Heart left ventricle (tissue), 16 donors: ENCODE measurements at regions of chr10 and their contacts with region 1.

Region 1: GRCh38 chr10:29998142-29998808 is 61.1 kb downstream of the JCAD start:
- DNase-seq: peak; percentile 68 to 79 (median 70)
- ATAC-seq: peak in 3 of 4 donors; percentile 56 to 73 (median 72)
- H3K4me3 ChIP-seq: no peak overlapping the region
- H3K27ac ChIP-seq: no peak overlapping the region
- H3K4me1 ChIP-seq: peaks cover 8 to 31% (median 27%) of the 10 kb centered on the region in 12 donors
- H3K27me3 ChIP-seq: peaks cover 0 to 4% (median 0%) of the 10 kb centered on the region in 9 donors
- CTCF ChIP-seq: peak; percentile 97 to 100 (median 98)
- POLR2A ChIP-seq: no peak

Region 2: GRCh38 chr10:29598851-29599311 is 399.4 kb before region 1 on chr10:
- intact Hi-C with region 1: loop called in 1 of 10 experiments (anchors 10 kb)
- DNase-seq: peak in 3 of 5 donors; percentile 48 to 63 (median 55)
- ATAC-seq: peak; percentile 82 to 86 (median 84)
- H3K4me3 ChIP-seq: peak overlapping the region in 5 of 12 donors; percentile 1 to 32 (median 15)
- H3K27ac ChIP-seq: peak overlapping the region; percentile 71 to 95 (median 80)
- H3K4me1 ChIP-seq: peaks cover 0 to 89% (median 31%) of the 10 kb centered on the region in 12 donors
- H3K27me3 ChIP-seq: no peaks in the 10 kb centered on the region
- CTCF ChIP-seq: no peak
- POLR2A ChIP-seq: no peak

Region 3: DNA sequence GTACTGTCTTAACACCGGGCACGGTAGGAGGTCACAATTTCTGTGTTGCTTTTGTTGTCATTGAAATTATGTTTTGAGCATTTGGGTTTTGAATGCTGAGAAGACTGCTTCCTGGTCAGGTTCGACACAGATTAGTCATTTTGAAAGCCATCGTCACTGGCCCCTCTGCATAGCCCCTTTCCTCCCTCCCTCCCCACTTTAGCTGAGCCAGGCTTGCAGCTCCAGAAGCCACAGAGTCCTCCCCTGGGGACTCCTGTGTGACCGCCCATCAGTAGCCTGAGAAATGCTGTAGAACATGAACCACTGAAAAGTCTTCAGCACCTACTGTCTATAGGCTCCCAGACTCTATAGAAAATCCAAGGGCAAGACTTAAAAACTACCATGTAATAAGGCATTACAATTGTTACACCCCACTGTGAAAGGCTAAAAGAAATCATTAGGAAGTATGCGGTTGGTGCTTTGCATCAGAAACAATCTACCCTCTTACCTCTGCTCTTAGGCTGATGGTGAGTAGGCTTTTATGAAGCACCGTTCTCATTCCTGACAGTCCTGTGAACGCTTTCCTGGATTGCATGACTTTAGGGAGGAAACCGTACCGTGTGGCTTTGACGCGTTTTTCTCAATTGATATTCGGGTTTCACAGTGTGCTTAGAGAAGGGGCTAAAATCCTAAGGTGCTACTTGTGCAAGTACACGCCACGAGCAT is 36.3 kb after region 1 on chr10:
- intact Hi-C with region 1: no loop called
- DNase-seq: no peak
- ATAC-seq: no peak
- H3K4me3 ChIP-seq: no peak overlapping the region
- H3K27ac ChIP-seq: no peak overlapping the region
- H3K4me1 ChIP-seq: peaks cover 3 to 60% (median 35%) of the 10 kb centered on the region in 12 donors
- H3K27me3 ChIP-seq: peaks cover 0 to 64% (median 0%) of the 10 kb centered on the region in 9 donors
- CTCF ChIP-seq: no peak
- POLR2A ChIP-seq: no peak

Region 4: DNA sequence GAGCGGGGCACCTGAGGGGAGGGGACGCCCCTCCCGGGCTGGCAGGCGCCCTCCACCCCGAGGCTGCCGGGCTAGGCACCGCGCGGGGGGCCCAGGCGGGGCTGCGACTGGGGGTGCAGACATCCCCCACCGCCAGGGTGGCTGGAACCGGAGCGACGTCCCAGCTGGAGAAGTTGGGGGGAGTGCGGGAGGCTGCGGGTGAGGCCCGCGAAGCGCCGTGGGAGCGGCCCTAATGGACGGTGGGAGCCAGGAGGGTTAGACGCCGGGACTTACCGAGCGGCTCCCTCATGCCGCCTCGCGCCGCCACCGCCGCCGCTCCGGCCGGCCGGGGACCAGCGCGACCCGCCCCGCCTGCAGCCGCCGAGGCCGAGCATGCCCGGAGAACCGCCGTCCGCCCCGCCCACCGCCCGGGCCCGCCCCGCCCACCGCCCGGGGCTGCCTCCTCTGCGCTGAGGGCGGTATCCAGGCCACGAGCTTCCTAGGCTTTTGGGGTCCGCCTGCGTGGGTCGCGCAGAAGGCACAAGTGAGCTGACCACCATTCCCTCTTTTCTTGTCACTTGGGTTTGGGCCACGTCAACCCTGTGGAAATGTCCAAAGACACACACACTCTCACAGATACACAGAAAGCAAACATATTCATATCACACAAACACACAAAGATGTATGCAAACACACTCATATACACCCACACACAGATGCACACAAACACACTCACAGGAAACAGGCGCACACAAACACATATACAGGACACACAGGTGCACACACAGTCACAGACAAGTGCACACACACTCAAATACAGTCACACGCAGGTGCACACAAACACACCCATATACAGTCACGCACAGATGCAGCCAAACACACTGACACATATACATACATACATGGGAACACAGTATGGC is 61.2 kb after region 1 on chr10 and contains the start of gene JCAD:
- intact Hi-C with region 1: loop called in 1 of 10 experiments (anchors 2 kb)
- DNase-seq: peak; percentile 82 to 88 (median 85)
- ATAC-seq: peak; percentile 46 to 95 (median 86)
- H3K4me3 ChIP-seq: peak within 1 kb of the TSS; percentile 72 to 97 (median 85)
- H3K27ac ChIP-seq: peak within 1 kb of the TSS; percentile 90 to 98 (median 94)
- H3K4me1 ChIP-seq: peaks cover 0 to 53% (median 20%) of the 10 kb centered on the region in 12 donors
- H3K27me3 ChIP-seq: peaks cover 0 to 42% (median 0%) of the 10 kb centered on the region in 9 donors
- CTCF ChIP-seq: no peak
- POLR2A ChIP-seq: peak in 1 of 2 donors; percentile 79
- total RNA-seq, gene JCAD: 10.4 to 51.7 (median 22.7) TPM

Region 5: GRCh38 chr10:30241422-30242110 is 243.3 kb after region 1 on chr10:
- intact Hi-C with region 1: loop called (anchors 1 to 5 kb)
- DNase-seq: no peak
- ATAC-seq: no peak
- H3K4me3 ChIP-seq: no peak overlapping the region
- H3K27ac ChIP-seq: no peak overlapping the region
- H3K4me1 ChIP-seq: peaks cover 0 to 13% (median 0%) of the 10 kb centered on the region in 12 donors
- H3K27me3 ChIP-seq: no peaks in the 10 kb centered on the region
- CTCF ChIP-seq: no peak
- POLR2A ChIP-seq: no peak

Region 6: DNA sequence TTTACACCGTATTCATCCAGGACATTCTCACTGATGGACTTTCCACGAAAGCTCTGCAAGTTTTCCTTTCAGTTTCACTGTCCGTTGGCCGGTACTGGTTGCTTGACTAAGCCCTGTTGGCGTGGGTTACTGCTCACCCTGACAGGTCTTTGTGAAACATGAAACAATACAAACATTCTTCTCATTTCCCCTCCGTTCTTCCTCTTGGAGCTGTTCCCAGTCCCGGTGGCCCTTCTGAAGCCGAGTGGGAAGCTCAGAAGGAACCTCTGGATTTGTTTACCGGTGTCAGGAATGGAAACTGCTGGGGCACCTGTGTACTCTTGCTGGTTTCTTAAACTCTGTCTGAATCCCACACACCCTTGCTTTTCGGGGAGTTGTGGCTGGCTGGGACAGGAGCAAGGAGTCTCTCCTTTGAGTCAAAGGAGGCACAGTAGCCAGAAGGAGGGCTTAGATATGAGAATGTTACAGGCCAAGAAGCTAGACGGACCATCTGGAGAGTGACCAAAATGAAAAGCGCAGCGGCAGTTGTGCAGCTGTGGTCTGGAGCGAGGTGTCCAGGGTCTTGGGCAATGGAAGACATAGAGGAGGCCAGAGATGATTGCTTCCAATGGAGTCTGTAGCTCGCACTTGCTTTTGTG is 585.6 kb after region 1 on chr10:
- intact Hi-C with region 1: loop called in 1 of 10 experiments (anchors 10 kb)
- DNase-seq: peak in 4 of 5 donors; percentile 66 to 83 (median 77)
- ATAC-seq: peak; percentile 85 to 97 (median 90)
- H3K4me3 ChIP-seq: peak overlapping the region in 10 of 12 donors; percentile 24 to 52 (median 42)
- H3K27ac ChIP-seq: peak overlapping the region; percentile 34 to 91 (median 82)
- H3K4me1 ChIP-seq: peaks cover 0 to 50% (median 11%) of the 10 kb centered on the region in 12 donors
- H3K27me3 ChIP-seq: no peaks in the 10 kb centered on the region
- CTCF ChIP-seq: peak in 1 of 12 donors; percentile 6
- POLR2A ChIP-seq: no peak